ENCODE measurements at regions of chr14 and their contacts with region 1.

Region 1: GRCh38 chr14:67999693-68000384 is 180.3 kb downstream of the RAD51B start:
- DNase-seq: peak; percentile 7
- ATAC-seq: peak; percentile 81
- H3K4me3 ChIP-seq: no peak overlapping the region
- H3K27ac ChIP-seq: peak overlapping the region; percentile 51; the same call in 1 of the 2 replicates
- H3K4me1 ChIP-seq: peaks cover 18% of the 10 kb centered on the region; the same call in 1 of the 2 replicates
- H3K27me3 ChIP-seq: no peaks in the 10 kb centered on the region
- CTCF ChIP-seq: no peak

Region 2: DNA sequence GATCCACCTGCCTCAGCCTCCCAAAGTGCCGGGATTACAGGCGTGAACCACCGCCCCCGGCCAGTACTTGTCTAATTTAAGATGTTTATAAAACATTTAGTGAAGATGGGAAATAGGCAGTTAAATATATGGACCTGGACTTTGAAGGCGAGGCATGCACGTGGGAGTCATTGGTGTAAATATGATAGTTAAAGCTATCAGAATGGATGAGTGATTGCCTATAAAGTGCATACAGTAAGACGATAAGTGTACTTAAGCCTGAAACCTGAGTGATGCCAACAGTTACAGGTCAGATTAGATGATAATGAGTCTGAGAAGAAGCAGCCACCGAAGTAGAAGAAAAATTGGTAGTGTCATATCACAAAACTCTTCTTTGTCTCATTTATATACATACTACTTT is 168.7 kb before region 1 on chr14:
- CTCF ChIA-PET with region 1: no interaction called
- POLR2A ChIA-PET with region 1: no interaction called
- in situ Hi-C with region 1: no loop called
- intact Hi-C with region 1: no loop called
- DNase-seq: no peak
- ATAC-seq: no peak
- H3K4me3 ChIP-seq: no peak overlapping the region
- H3K27ac ChIP-seq: no peak overlapping the region
- H3K4me1 ChIP-seq: no peaks in the 10 kb centered on the region
- H3K27me3 ChIP-seq: no peaks in the 10 kb centered on the region
- CTCF ChIP-seq: no peak

Region 3: GRCh38 chr14:67943947-67944346 is 55.9 kb before region 1 on chr14:
- CTCF ChIA-PET with region 1: interaction called, 19 read pairs
- POLR2A ChIA-PET with region 1: no interaction called
- in situ Hi-C with region 1: no loop called
- intact Hi-C with region 1: no loop called
- DNase-seq: peak; percentile 57
- ATAC-seq: peak; percentile 86
- H3K4me3 ChIP-seq: no peak overlapping the region
- H3K27ac ChIP-seq: peak overlapping the region; percentile 87; the same call in 1 of the 2 replicates
- H3K4me1 ChIP-seq: peaks cover 36% of the 10 kb centered on the region
- H3K27me3 ChIP-seq: no peaks in the 10 kb centered on the region
- CTCF ChIP-seq: peak; percentile 58; the same call in 1 of the 2 replicates

Region 4: GRCh38 chr14:68042608-68043210 is 42.9 kb after region 1 on chr14:
- CTCF ChIA-PET with region 1: no interaction called
- POLR2A ChIA-PET with region 1: interaction called, 10 read pairs
- in situ Hi-C with region 1: no loop called
- intact Hi-C with region 1: no loop called
- DNase-seq: no peak
- ATAC-seq: no peak
- H3K4me3 ChIP-seq: no peak overlapping the region
- H3K27ac ChIP-seq: 0 out of 2 replicates have a peak overlapping the region, but pooled peaks have one; percentile 17
- H3K4me1 ChIP-seq: no peaks in the 10 kb centered on the region
- H3K27me3 ChIP-seq: no peaks in the 10 kb centered on the region
- CTCF ChIP-seq: no peak

Region 5: DNA sequence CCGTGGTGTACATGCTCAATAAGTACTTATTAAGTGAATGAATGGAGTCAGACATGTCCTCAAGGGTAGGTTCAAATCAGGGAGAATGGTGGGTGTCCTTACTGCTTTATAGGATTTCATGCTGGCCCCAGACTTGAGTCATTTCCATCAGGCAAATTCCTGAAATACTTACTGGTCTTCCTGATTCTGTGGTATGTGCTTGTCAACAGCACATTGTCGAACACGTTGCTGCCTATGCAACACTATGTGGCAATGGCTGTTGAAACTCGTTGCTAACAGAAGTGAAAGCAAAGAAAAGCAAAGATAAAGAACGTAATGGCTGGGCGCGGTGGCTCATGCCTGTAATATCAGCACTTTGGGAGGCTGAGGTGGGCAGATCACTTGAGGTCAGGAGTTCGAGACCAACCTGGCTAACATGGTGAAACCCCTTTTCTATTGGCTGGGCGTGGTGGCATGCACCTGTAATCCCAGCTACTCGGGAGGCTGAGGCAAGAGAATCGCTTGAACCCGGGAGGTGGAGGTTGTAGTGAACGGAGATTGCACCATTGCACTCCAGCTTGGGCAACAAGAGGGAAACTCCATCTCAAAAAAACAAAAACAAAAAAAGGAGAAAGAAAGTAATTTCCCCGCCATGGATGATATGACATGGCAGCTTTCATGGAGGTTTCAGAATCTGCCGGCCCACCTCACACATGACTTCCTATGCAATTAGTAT is 578.1 kb after region 1 on chr14:
- CTCF ChIA-PET with region 1: no interaction called
- POLR2A ChIA-PET with region 1: no interaction called
- in situ Hi-C with region 1: no loop called
- intact Hi-C with region 1: no loop called
- DNase-seq: no peak
- ATAC-seq: peak; percentile 48; the same call in 1 of the 2 replicates
- H3K4me3 ChIP-seq: no peak overlapping the region
- H3K27ac ChIP-seq: peak overlapping the region; percentile 23; the same call in 1 of the 2 replicates
- H3K4me1 ChIP-seq: no peaks in the 10 kb centered on the region; the same call in 1 of the 2 replicates
- H3K27me3 ChIP-seq: no peaks in the 10 kb centered on the region
- CTCF ChIP-seq: no peak

Measured in Panc1 (cell line).